Activated CD8-positive, alpha-beta T cell treated with anti-CD3 and anti-CD28 coated beads for 36 hours (primary cell): ENCODE measurements at regions of chr5 and their contacts with region 1.

Region 1: GRCh38 chr5:157858527-157859226 is at the start of gene CLINT1:
- DNase-seq: peak; percentile 93
- ATAC-seq: peak; percentile 83
- H3K4me3 Mint-ChIP-seq: peak within 1 kb of the TSS; percentile 97
- H3K27ac Mint-ChIP-seq: peak within 1 kb of the TSS; percentile 98
- H3K4me1 Mint-ChIP-seq: peaks cover 62% of the 10 kb centered on the region
- H3K27me3 Mint-ChIP-seq: no peaks in the 10 kb centered on the region
- CTCF ChIP-seq: no peak
- total RNA-seq, gene CLINT1: 56.8 to 60.7 TPM

Region 2: DNA sequence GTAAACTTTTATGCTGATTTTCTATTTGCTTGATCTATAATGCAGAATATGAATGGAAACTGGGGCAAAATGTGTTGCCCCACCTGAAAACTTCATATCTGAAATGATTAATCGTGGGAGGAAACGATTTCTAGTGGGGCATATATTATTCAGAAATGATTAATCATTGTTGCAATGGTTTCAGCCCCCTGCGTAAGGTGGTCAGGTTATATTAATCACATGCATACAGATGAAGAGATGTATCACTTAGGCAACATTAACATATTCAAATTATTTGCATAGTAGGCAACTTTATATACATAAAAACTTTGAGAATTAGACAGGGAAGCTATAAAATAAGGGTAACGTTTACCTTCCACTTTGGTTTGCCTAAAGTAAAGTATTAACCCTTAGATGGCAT is 65.4 kb before region 1 on chr5:
- CTCF ChIA-PET with region 1: no interaction called
- POLR2A ChIA-PET with region 1: no interaction called
- intact Hi-C with region 1: no loop called
- DNase-seq: peak; percentile 5
- ATAC-seq: peak; percentile 47
- H3K4me3 Mint-ChIP-seq: no peak overlapping the region
- H3K27ac Mint-ChIP-seq: peak overlapping the region; percentile 9
- H3K4me1 Mint-ChIP-seq: peaks cover 9% of the 10 kb centered on the region
- H3K27me3 Mint-ChIP-seq: no peaks in the 10 kb centered on the region
- CTCF ChIP-seq: no peak

Region 3: GRCh38 chr5:157820593-157821252 is 38.0 kb before region 1 on chr5:
- CTCF ChIA-PET with region 1: interaction called, 19 read pairs
- POLR2A ChIA-PET with region 1: no interaction called
- intact Hi-C with region 1: no loop called
- DNase-seq: peak; percentile 45
- ATAC-seq: no peak
- H3K4me3 Mint-ChIP-seq: no peak overlapping the region
- H3K27ac Mint-ChIP-seq: no peak overlapping the region
- H3K4me1 Mint-ChIP-seq: peaks cover 39% of the 10 kb centered on the region
- H3K27me3 Mint-ChIP-seq: no peaks in the 10 kb centered on the region
- CTCF ChIP-seq: peak; percentile 55

Region 4: DNA sequence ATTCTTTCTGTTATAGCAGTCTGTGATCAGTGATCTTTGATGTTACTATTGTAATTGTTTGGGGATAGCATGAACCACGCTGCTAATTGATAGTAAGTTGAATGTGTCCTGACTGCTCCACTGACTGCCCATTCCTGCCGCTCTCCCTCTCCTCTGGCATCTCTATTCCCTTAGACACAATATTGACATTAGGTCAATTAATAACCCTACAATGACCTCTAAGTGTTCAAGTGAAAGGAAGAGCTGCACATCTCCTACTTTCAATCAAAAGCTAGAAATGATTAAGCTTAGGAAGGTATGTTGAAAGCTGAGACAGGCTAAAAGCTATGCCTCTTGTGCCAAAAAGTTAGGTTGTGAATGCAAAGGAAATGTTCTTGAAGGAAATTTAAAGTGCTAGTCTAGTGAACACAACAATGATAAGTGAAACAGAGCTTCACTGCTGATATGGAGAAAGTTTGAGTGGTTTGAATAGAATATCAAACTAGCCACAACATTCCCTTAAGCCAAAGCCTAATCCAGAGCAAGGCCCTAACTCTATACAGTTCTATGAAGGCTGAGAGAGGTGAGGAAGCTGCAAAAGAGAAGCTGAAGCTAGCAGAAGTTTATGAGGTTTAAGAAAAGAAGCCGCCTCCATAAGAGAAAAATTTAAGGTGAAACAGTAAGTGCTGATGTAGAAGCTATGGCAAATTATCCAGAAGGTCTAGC is 12.6 kb before region 1 on chr5:
- CTCF ChIA-PET with region 1: interaction called, 14 read pairs
- POLR2A ChIA-PET with region 1: interaction called, 4 read pairs
- intact Hi-C with region 1: no loop called
- DNase-seq: no peak
- ATAC-seq: no peak
- H3K4me3 Mint-ChIP-seq: no peak overlapping the region
- H3K27ac Mint-ChIP-seq: no peak overlapping the region
- H3K4me1 Mint-ChIP-seq: peaks cover 27% of the 10 kb centered on the region
- H3K27me3 Mint-ChIP-seq: no peaks in the 10 kb centered on the region
- CTCF ChIP-seq: no peak

Region 5: DNA sequence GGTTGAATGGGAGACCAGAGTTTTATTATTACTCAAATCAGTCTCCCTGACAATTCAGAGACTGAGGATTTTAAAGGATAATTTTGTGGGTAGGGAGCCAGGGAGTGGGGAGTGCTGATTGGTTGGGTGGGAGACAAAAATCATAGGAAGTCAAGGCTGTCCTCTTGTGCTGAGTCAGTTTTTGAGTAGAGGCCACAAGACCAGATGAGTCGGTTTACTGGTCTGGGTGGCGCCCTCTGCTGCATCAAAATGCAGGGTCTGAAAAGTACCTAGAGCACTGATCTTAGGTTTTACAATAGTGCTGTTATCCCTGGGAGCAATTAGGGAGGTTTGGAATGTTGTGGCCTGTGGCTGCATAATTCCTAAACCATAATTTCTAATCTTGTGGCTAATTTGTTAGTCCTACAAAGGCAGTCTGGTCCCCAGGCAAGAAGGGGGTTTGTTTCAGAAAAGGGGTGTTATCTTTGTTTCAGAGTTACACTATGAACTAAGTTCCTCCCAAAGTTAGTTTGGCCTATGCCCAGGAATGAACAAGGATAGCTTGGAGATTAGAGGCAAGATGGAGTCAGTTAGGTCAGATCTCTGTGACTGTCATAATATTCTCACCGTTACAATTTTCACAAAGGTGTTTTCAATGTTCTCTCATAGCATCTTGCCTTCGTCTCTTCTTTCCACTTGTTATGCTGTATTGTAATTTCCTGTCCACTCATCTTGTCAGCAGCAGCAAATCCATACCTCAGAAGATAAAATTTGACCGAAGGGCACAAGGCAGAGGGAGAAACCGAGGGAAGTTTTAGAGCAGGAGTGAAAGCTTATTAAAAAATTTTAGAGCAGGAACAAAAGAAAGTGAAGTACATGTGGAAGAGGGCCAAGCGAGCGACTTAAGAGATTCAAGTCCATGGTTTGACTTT is 59.5 kb after region 1 on chr5:
- CTCF ChIA-PET with region 1: interaction called, 5 read pairs
- POLR2A ChIA-PET with region 1: interaction called, 4 read pairs
- intact Hi-C with region 1: loop called (anchors 5 kb)
- DNase-seq: peak; percentile 87
- ATAC-seq: peak; percentile 75
- H3K4me3 Mint-ChIP-seq: no peak overlapping the region
- H3K27ac Mint-ChIP-seq: no peak overlapping the region
- H3K4me1 Mint-ChIP-seq: peaks cover 26% of the 10 kb centered on the region
- H3K27me3 Mint-ChIP-seq: no peaks in the 10 kb centered on the region
- CTCF ChIP-seq: peak; percentile 74